ENCODE measurements at regions of chr7 and their contacts with region 1.

Region 1: GRCh38 chr7:50206453-50207250 is 97.9 kb upstream of the IKZF1 start:
- DNase-seq: peak; percentile 86
- ATAC-seq: peak; percentile 67
- H3K4me3 Mint-ChIP-seq: peak overlapping the region; percentile 52
- H3K27ac Mint-ChIP-seq: peak overlapping the region; percentile 89
- H3K4me1 Mint-ChIP-seq: peaks cover 97% of the 10 kb centered on the region
- H3K27me3 Mint-ChIP-seq: no peaks in the 10 kb centered on the region

Region 2: DNA sequence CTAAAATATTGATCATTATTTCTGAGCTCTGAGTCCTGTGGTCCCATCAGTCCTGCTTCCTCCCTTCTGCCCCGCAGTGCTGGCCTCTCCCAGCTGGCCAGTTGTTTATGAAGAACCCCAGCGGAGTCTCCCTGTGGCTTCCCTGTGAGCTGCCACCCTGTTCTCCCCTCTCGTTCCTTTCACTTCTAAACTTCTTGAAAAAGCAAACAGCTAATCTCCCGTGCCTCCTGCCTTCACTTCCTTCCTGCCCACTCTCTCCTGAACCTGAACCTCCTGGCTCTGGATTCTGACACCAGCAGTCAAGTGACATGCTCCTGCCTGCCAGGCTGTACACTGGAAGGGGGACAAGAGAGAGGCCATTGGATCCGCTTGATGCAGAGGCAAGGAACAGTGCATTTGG is 49.9 kb before region 1 on chr7:
- CTCF ChIA-PET with region 1: interaction called, 13 read pairs
- POLR2A ChIA-PET with region 1: no interaction called
- intact Hi-C with region 1: no loop called
- DNase-seq: no peak
- ATAC-seq: no peak
- H3K4me3 Mint-ChIP-seq: peak overlapping the region; percentile 51
- H3K27ac Mint-ChIP-seq: peak overlapping the region; percentile 96
- H3K4me1 Mint-ChIP-seq: peaks cover 48% of the 10 kb centered on the region
- H3K27me3 Mint-ChIP-seq: no peaks in the 10 kb centered on the region

Region 3: DNA sequence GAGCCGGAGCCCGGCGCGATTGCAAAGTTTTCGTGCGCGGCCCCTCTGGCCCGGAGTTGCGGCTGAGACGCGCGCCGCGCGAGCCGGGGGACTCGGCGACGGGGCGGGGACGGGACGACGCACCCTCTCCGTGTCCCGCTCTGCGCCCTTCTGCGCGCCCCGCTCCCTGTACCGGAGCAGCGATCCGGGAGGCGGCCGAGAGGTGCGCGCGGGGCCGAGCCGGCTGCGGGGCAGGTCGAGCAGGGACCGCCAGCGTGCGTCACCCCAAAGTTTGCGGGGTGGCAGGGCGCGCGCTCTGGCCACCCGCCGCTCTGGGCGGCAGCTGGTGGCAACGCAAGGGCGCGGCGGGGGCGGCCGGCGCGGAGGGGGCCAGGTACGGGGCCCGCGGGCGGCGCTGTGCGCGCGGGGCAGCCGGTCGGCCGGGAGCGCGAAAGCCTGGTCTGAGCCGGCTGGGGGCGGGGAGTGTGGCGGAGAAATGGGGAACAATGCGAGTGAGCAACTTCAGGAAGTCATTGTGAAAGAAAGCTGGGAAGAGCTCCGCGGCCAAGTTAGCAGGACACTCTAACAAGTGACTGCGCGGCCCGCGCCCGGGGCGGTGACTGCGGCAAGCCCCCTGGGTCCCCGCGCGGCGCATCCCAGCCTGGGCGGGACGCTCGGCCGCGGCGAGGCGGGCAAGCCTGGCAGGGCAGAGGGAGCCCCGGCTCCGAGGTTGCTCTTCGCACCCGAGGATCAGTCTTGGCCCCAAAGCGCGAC is 97.7 kb after region 1 on chr7 and contains the start of gene IKZF1:
- CTCF ChIA-PET with region 1: interaction called, 126 read pairs
- POLR2A ChIA-PET with region 1: interaction called, 14 read pairs
- intact Hi-C with region 1: loop called (anchors 1 kb)
- DNase-seq: peak; percentile 82
- ATAC-seq: peak; percentile 21
- H3K4me3 Mint-ChIP-seq: peak within 1 kb of the TSS; percentile 95
- H3K27ac Mint-ChIP-seq: peak within 1 kb of the TSS; percentile 100
- H3K4me1 Mint-ChIP-seq: peaks cover 40% of the 10 kb centered on the region
- H3K27me3 Mint-ChIP-seq: no peaks in the 10 kb centered on the region
- total RNA-seq, gene IKZF1: 245 to 260 TPM

Region 4: DNA sequence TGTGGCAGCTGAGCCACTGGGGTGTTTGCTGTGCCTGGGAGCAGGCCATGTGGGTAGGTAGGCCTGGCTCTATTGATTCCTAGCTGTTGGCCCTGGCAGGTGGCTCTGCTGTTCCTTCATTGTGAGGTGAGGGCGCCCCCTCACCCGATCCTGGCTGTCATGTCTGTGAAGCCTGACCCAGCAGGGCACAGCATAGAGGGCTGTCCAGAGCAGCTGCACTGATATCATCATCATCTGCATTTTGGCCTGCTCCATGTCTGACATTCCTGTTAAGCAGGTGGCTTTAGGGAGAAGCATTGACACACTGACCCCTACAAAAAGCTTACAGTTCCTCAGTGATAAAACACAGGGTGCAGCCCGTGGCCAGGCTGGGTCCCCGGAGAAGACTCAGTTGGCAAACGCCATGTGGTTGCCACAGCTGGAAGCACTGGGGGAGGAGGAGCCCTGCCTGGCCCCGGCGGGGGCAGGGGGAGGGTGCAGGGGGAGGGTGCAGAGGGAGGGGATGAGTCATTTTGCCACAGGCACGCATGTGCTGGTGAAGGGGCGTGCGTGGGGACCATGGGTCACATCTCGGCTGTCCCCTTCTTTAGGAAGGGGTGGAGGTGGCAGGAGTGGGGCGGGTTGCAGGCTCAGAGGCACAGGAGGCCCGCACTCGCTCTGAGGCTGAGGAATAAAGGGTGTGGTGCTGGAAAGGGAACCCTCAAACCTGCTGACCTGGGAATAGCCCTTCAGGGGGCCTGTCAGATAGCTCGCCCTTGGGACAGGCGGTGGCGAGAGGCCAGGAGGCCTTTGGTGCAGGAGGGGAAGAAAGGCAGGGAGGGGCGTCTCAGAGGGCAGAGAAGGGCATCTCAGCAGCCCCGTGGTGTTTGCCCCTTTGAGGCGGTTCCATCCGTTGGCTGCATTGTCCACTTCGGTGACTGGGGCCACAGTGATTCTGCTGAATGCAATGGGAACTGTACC is 129.4 kb after region 1 on chr7:
- CTCF ChIA-PET with region 1: interaction called, 9 read pairs
- POLR2A ChIA-PET with region 1: interaction called, 3 read pairs
- intact Hi-C with region 1: loop called in 1 of 2 experiments (anchors 1 kb)
- DNase-seq: peak; percentile 93
- ATAC-seq: peak; percentile 34
- H3K4me3 Mint-ChIP-seq: no peak overlapping the region
- H3K27ac Mint-ChIP-seq: no peak overlapping the region
- H3K4me1 Mint-ChIP-seq: peaks cover 2% of the 10 kb centered on the region
- H3K27me3 Mint-ChIP-seq: no peaks in the 10 kb centered on the region

Region 5: GRCh38 chr7:50359995-50360925 is 153.6 kb after region 1 on chr7:
- CTCF ChIA-PET with region 1: interaction called, 93 read pairs
- POLR2A ChIA-PET with region 1: interaction called, 5 read pairs
- intact Hi-C with region 1: no loop called
- DNase-seq: peak; percentile 89
- ATAC-seq: peak; percentile 77
- H3K4me3 Mint-ChIP-seq: peak overlapping the region; percentile 67
- H3K27ac Mint-ChIP-seq: peak overlapping the region; percentile 99
- H3K4me1 Mint-ChIP-seq: peaks cover 97% of the 10 kb centered on the region
- H3K27me3 Mint-ChIP-seq: no peaks in the 10 kb centered on the region

Region 6: GRCh38 chr7:50397320-50397970 is 190.8 kb after region 1 on chr7:
- CTCF ChIA-PET with region 1: interaction called, 8 read pairs
- POLR2A ChIA-PET with region 1: no interaction called
- intact Hi-C with region 1: loop called in 1 of 2 experiments (anchors 1 kb)
- DNase-seq: peak; percentile 63
- ATAC-seq: peak; percentile 12
- H3K4me3 Mint-ChIP-seq: peak overlapping the region; percentile 26
- H3K27ac Mint-ChIP-seq: peak overlapping the region; percentile 82
- H3K4me1 Mint-ChIP-seq: peaks cover 80% of the 10 kb centered on the region
- H3K27me3 Mint-ChIP-seq: no peaks in the 10 kb centered on the region

Region 7: GRCh38 chr7:50664461-50664922 is 457.8 kb after region 1 on chr7:
- CTCF ChIA-PET with region 1: no interaction called
- POLR2A ChIA-PET with region 1: no interaction called
- intact Hi-C with region 1: loop called in 1 of 2 experiments (anchors 5 kb)
- DNase-seq: peak; percentile 47
- ATAC-seq: peak; percentile 69
- H3K4me3 Mint-ChIP-seq: no peak overlapping the region
- H3K27ac Mint-ChIP-seq: no peak overlapping the region
- H3K4me1 Mint-ChIP-seq: peaks cover 59% of the 10 kb centered on the region
- H3K27me3 Mint-ChIP-seq: peaks cover 2% of the 10 kb centered on the region

Measured in activated CD4-positive, alpha-beta T cell treated with anti-CD3 and anti-CD28 coated beads for 36 hours (primary cell).